ENCODE measurements at regions of chr19 and their contacts with region 1.

Region 1: DNA sequence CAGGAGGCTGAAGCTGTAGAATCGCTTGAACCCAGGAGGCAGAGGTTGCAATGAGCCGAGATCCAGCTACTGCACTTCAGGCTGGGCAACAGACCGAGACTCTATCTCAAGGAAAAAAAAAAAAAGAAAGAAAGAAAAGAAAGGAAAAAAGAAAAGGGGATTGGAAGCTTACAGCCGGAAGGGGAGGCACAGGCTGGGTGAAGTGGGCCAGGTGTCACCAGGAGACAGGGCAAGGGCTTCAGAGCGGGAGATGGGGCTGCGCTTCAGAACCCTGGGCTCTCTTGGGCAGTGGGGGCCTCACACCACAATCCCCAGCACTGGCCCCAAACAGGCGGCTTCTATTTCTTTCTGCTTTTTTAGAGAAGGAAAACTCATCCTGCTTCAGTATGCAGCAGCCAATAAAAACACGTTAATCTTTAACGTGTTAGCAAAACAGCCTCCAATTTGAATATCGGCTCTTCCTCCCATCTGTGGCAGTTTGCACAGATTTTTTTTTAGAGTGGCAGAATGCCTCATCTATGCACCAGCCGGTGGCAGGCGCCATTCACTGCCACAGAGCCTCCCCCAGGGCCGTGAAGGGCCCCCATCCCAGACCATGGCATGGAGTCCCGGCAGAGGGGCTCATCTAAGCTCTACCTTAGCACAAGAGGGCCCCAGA is 46.6 kb upstream of the C19orf12 start:
- DNase-seq: no peak
- H3K4me3 ChIP-seq: no peak overlapping the region
- H3K27ac ChIP-seq: no peak overlapping the region
- H3K4me1 ChIP-seq: peaks cover 2% of the 10 kb centered on the region
- H3K27me3 ChIP-seq: no peaks in the 10 kb centered on the region
- CTCF ChIP-seq: no peak
- POLR2A ChIP-seq: no peak

Region 2: GRCh38 chr19:29704562-29705558 is 56.8 kb before region 1 on chr19:
- CTCF ChIA-PET with region 1: no interaction called
- POLR2A ChIA-PET with region 1: no interaction called
- dilution Hi-C with region 1: no loop called
- intact Hi-C with region 1: no loop called
- DNase-seq: no peak
- H3K4me3 ChIP-seq: no peak overlapping the region
- H3K27ac ChIP-seq: no peak overlapping the region
- H3K4me1 ChIP-seq: no peaks in the 10 kb centered on the region
- H3K27me3 ChIP-seq: no peaks in the 10 kb centered on the region
- CTCF ChIP-seq: no peak
- POLR2A ChIP-seq: no peak

Region 3: DNA sequence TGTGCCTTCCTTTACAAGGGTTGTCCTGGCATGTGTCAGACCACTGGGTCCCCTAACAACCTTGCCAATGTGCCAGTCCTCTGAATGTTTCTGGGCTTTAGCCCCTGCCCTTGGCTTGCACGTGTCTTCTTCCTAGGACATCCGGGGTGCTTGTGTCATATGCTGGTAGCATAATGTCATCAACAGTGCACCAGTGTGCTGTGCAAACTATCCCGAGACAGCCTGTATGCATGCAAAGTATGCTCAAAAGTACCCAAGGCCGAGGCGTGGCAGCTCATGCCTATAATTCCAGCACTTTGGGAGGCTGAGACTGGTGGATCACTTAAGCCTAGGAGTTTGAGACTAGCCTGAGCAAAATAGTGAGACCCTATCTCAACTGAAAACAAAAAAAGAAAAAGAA is 25.9 kb before region 1 on chr19:
- CTCF ChIA-PET with region 1: interaction called, 19 read pairs
- POLR2A ChIA-PET with region 1: no interaction called
- dilution Hi-C with region 1: no loop called
- intact Hi-C with region 1: loop called (anchors 1 kb)
- DNase-seq: no peak
- H3K4me3 ChIP-seq: no peak overlapping the region
- H3K27ac ChIP-seq: no peak overlapping the region
- H3K4me1 ChIP-seq: no peaks in the 10 kb centered on the region
- H3K27me3 ChIP-seq: no peaks in the 10 kb centered on the region
- CTCF ChIP-seq: no peak
- POLR2A ChIP-seq: no peak

Region 4: DNA sequence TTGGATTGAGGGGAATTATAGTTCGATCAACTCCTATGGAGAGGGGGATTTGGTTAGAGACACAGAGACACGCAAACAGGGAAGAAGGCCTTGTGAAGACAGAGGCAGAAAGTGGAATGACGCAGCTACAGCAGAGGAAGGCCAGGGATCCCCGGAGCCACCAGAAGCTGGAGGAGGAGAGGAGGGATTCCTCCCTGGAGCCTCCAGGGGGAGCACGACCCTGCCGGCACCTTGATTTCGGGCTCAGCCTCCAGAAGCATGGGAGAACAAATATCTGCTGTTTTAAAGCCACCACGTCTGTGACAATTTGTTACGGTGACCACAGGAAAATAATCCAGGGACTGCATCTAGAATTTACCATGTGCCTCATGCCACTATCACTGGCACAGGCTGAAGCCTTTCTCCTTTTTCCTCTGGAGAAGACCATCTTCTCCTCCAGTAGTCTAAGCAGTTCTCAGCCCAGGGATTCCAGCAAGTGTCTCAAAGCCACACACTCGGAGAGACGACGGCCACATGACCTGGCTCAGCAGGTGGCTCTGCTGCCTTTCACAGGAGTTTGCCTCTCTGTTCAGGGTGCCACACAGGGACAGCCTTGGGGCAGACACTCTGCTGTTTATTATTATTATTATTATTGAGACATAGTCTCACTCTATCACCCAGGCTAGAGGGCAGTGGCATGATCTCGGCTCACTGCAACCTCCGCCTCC is 10.2 kb after region 1 on chr19:
- CTCF ChIA-PET with region 1: interaction called, 56 read pairs
- POLR2A ChIA-PET with region 1: no interaction called
- dilution Hi-C with region 1: no loop called
- intact Hi-C with region 1: no loop called
- DNase-seq: peak; percentile 38
- H3K4me3 ChIP-seq: no peak overlapping the region
- H3K27ac ChIP-seq: no peak overlapping the region
- H3K4me1 ChIP-seq: no peaks in the 10 kb centered on the region
- H3K27me3 ChIP-seq: no peaks in the 10 kb centered on the region
- CTCF ChIP-seq: peak; percentile 57 to 82
- POLR2A ChIP-seq: no peak

Region 5: GRCh38 chr19:29844891-29845572 is 83.3 kb after region 1 on chr19:
- CTCF ChIA-PET with region 1: interaction called, 12 read pairs
- POLR2A ChIA-PET with region 1: no interaction called
- dilution Hi-C with region 1: no loop called
- intact Hi-C with region 1: no loop called
- DNase-seq: peak; percentile 88
- H3K4me3 ChIP-seq: peak overlapping the region; percentile 27 to 57 (median 46)
- H3K27ac ChIP-seq: no peak overlapping the region
- H3K4me1 ChIP-seq: peaks cover 8% of the 10 kb centered on the region
- H3K27me3 ChIP-seq: peaks cover 5 to 20% of the 10 kb centered on the region in 2 experiments
- CTCF ChIP-seq: no peak
- POLR2A ChIP-seq: no peak

Region 6: DNA sequence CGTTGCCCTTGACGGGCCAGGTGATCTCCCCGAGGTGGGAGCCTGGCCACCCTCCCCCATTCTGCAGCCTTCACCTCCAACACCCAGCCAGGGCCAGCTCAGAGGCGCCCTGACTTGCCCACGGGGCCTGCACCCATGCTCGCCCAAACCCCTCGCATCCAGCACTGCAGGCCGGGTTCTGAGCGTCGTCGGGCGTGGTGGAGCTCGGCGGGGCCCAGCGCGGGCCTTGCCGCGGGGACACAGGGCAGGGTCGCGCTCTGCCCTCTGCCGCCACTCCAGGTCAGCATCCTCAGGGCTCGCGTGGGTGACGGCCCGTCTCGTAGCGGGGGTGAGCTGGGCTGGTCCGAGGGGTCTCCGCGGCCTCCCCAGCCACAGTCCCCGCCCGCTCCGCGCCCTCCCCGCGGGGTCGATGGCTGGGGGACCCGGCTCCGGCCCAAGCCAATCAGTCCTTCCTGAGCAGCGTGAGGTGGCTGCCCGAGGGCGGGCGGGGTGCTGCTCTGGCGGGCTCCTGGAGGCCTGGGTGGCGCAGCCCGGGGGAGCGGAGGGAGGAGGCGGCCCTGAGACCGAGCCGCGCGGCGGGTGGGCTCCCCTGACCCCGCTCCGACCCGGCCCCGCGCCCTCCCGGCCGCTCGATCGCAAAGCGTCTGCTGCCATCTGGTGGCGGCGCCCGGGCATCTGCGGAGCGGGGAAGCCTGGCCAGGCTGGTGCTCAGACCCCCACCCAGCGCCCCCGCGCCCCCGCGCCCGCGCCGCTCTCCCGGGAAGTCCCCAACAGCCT is 111.5 kb after region 1 on chr19:
- CTCF ChIA-PET with region 1: interaction called, 116 read pairs
- POLR2A ChIA-PET with region 1: no interaction called
- dilution Hi-C with region 1: no loop called
- intact Hi-C with region 1: loop called (anchors 1 kb)
- DNase-seq: no peak
- H3K4me3 ChIP-seq: peak overlapping the region in 1 of 3 experiments; percentile 23
- H3K27ac ChIP-seq: no peak overlapping the region
- H3K4me1 ChIP-seq: peaks cover 4% of the 10 kb centered on the region
- H3K27me3 ChIP-seq: no peaks in the 10 kb centered on the region
- CTCF ChIP-seq: peak; percentile 70 to 77
- POLR2A ChIP-seq: no peak

Region 7: DNA sequence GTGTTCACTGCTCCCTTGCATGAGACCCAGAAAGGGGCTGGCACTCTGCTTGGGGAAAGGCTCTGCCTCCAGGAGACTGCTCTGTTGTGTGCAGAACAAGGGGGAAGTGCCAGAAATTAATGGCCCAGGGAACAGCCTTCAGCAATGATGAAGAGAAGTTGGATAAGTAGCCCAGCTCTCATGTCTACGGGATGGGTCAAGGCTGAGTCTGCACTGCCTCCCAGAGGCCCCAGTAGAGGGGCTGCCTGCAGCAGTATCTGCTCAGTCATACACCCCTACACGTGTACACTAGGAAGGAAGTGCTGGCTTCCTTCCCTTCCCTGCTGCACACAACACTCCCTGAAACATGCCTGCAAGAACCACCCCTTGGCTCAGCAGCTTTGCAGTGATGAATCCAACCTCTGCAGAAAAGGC is 125.7 kb after region 1 on chr19:
- CTCF ChIA-PET with region 1: interaction called, 13 read pairs
- POLR2A ChIA-PET with region 1: no interaction called
- dilution Hi-C with region 1: no loop called
- intact Hi-C with region 1: no loop called
- DNase-seq: peak; percentile 33
- H3K4me3 ChIP-seq: no peak overlapping the region
- H3K27ac ChIP-seq: no peak overlapping the region
- H3K4me1 ChIP-seq: peaks cover 4% of the 10 kb centered on the region
- H3K27me3 ChIP-seq: no peaks in the 10 kb centered on the region
- CTCF ChIP-seq: no peak
- POLR2A ChIP-seq: no peak